ENCODE measurements at regions of chr2 and their contacts with region 1.

Region 1: GRCh38 chr2:86035883-86036668 is 69.6 kb downstream of the POLR1A start:
- DNase-seq: peak; percentile 91 to 96
- ATAC-seq: peak; percentile 83 to 87
- H3K4me3 ChIP-seq: no peak overlapping the region
- H3K27ac ChIP-seq: peak overlapping the region; percentile 91 to 99 (median 98)
- H3K4me1 ChIP-seq: peaks cover 52 to 58% of the 10 kb centered on the region in 2 donors
- H3K27me3 ChIP-seq: no peaks in the 10 kb centered on the region
- CTCF ChIP-seq: peak; percentile 21 to 55 (median 29)
- POLR2A ChIP-seq: peak; percentile 67 to 84

Region 2: GRCh38 chr2:85888684-85889626 is 147.1 kb before region 1 on chr2 and contains the start of gene ST3GAL5:
- in situ Hi-C with region 1: no loop called
- intact Hi-C with region 1: loop called (anchors 1 kb)
- DNase-seq: peak; percentile 84
- ATAC-seq: peak; percentile 74 to 80
- H3K4me3 ChIP-seq: peak within 1 kb of the TSS; percentile 53 to 87 (median 72)
- H3K27ac ChIP-seq: peak within 1 kb of the TSS; percentile 82 to 92 (median 88)
- H3K4me1 ChIP-seq: peaks cover 28 to 33% of the 10 kb centered on the region in 2 donors
- H3K27me3 ChIP-seq: no peaks in the 10 kb centered on the region
- CTCF ChIP-seq: peak; percentile 59 to 80 (median 66)
- POLR2A ChIP-seq: peak; percentile 48 to 78
- total RNA-seq, gene ST3GAL5: 12.6 to 26.0 (median 21.8) TPM

Region 3: DNA sequence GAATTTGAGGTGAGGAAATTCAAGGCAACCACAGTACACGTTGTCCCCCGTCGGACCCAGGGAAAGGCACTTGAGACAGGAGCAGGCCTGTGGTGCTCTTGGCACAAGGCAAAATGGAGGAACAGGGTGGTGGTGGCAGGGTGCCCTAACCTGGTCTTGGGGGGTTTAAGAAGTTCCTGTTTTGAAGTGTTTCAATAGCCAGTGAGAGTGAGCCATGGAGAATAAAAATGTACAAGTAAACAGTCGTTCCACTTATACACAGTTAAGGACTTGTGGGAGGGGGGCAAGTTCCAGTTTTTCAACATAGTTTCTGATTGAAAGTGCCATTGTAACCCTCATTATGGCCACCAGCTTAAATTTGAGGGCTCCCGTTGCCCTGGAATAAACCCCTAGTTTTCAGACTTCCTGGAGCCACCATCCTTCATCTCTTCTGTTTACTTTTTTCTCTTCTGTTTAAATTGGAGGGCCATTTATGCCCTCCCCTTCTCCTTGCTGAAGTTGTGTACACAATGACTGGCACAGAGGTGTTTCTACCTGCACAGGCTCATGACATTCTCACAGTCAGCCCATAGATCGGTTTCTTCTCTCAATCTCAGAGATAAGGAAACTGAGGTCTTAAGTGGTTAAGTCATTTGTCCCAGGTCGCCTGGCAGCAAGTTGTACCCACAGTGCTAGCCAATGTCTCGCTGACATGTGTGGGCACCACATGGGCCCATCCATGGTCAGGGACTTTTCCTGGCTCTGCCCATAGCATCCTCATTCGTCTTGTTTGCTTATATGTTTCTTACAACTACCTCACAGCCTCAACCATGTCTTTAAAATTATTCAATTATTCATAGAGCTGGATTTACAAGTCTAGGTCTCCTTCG is 81.3 kb before region 1 on chr2:
- in situ Hi-C with region 1: no loop called
- intact Hi-C with region 1: loop called (anchors 5 kb)
- DNase-seq: no peak
- ATAC-seq: no peak
- H3K4me3 ChIP-seq: no peak overlapping the region
- H3K27ac ChIP-seq: no peak overlapping the region
- H3K4me1 ChIP-seq: peaks cover 16 to 20% of the 10 kb centered on the region in 2 donors
- H3K27me3 ChIP-seq: no peaks in the 10 kb centered on the region
- CTCF ChIP-seq: no peak
- POLR2A ChIP-seq: no peak

Region 4: DNA sequence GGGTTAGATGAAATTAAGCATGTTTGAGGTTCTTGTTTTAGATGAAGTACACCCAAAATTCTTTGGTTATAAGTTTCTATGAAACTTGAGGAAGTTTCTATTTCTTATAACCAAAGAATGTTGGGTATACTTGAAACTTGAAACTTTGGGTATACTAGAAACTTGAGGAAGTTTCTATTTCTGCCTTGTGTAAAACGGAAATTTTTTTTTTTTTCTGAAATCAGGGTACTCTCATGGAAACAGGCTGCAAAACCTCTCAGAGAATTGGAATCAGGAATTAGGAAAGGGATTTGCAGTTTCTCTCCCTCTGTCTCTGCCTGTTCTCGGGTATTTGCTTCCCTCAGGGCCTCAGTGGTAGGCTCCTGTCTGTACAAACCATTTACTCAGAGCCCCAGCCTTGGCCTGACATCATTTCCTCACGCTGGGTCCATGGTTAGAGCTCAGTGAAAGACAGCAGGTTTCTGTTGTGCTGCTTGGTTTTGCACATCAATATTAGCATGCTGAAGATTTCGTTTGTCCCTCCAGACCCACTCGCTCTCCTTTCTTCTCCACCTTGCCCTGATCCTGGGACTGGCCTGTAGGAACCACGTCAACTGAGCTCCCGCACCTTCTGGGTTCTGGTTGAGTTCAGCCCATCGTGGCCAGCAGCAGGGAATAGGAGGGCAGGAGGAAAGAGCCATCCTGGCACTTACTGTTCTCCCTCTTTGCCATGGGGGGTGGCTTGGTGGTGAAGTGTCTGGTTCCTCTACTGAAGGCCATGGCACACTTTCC is 36.8 kb before region 1 on chr2:
- in situ Hi-C with region 1: no loop called
- intact Hi-C with region 1: loop called (anchors 5 kb)
- DNase-seq: no peak
- ATAC-seq: no peak
- H3K4me3 ChIP-seq: no peak overlapping the region
- H3K27ac ChIP-seq: peak overlapping the region; percentile 62 to 78 (median 70)
- H3K4me1 ChIP-seq: peaks cover 22 to 33% of the 10 kb centered on the region in 2 donors
- H3K27me3 ChIP-seq: no peaks in the 10 kb centered on the region
- CTCF ChIP-seq: no peak
- POLR2A ChIP-seq: no peak

Region 5: GRCh38 chr2:86017901-86018896 is 17.9 kb before region 1 on chr2:
- in situ Hi-C with region 1: no loop called
- intact Hi-C with region 1: loop called (anchors 1 kb)
- DNase-seq: peak; percentile 87 to 94
- ATAC-seq: peak; percentile 61 to 74
- H3K4me3 ChIP-seq: no peak overlapping the region
- H3K27ac ChIP-seq: peak overlapping the region; percentile 75 to 88 (median 86)
- H3K4me1 ChIP-seq: peaks cover 29 to 41% of the 10 kb centered on the region in 2 donors
- H3K27me3 ChIP-seq: no peaks in the 10 kb centered on the region
- CTCF ChIP-seq: no peak
- POLR2A ChIP-seq: peak in 1 of 2 donors; percentile 42

Region 6: GRCh38 chr2:86066007-86066578 is 30.0 kb after region 1 on chr2:
- in situ Hi-C with region 1: no loop called
- intact Hi-C with region 1: loop called (anchors 2 kb)
- DNase-seq: no peak
- ATAC-seq: no peak
- H3K4me3 ChIP-seq: no peak overlapping the region
- H3K27ac ChIP-seq: peak overlapping the region; percentile 81 to 91 (median 87)
- H3K4me1 ChIP-seq: peaks cover 11 to 26% of the 10 kb centered on the region in 2 donors
- H3K27me3 ChIP-seq: no peaks in the 10 kb centered on the region
- CTCF ChIP-seq: no peak
- POLR2A ChIP-seq: no peak